ENCODE measurements at regions of chr16 and their contacts with region 1.

Region 1: GRCh38 chr16:75110637-75111513 is 5.7 kb downstream of the LDHD start:
- DNase-seq: peak; percentile 62
- ATAC-seq: peak; percentile 92
- H3K4me3 ChIP-seq: no peak overlapping the region
- H3K27ac ChIP-seq: no peak overlapping the region; the same call in 1 of the 2 replicates
- H3K4me1 ChIP-seq: peaks cover 36% of the 10 kb centered on the region
- H3K27me3 ChIP-seq: no peaks in the 10 kb centered on the region
- CTCF ChIP-seq: peak; percentile 95 to 97 (median 96)
- EP300 ChIP-seq: no peak
- POLR2A ChIP-seq: 0 out of 2 replicates have a peak, but pooled peaks have one; percentile 29
- RAD21 ChIP-seq: peak; percentile 97

Region 2: GRCh38 chr16:74709441-74709877 is 401.4 kb before region 1 on chr16:
- CTCF ChIA-PET with region 1: interaction called, 11 read pairs
- POLR2A ChIA-PET with region 1: no interaction called
- RAD21 ChIA-PET with region 1: interaction called, 4 read pairs
- SMC1A ChIA-PET with region 1: interaction called, 5 read pairs
- in situ Hi-C with region 1: loop called (anchors 5 kb)
- intact Hi-C with region 1: loop called (anchors 2 kb)
- DNase-seq: no peak
- ATAC-seq: peak; percentile 99
- H3K4me3 ChIP-seq: no peak overlapping the region
- H3K27ac ChIP-seq: no peak overlapping the region
- H3K4me1 ChIP-seq: no peaks in the 10 kb centered on the region
- H3K27me3 ChIP-seq: no peaks in the 10 kb centered on the region
- CTCF ChIP-seq: peak; percentile 95 to 99 (median 97)
- EP300 ChIP-seq: no peak
- POLR2A ChIP-seq: no peak
- RAD21 ChIP-seq: peak; percentile 94

Region 3: DNA sequence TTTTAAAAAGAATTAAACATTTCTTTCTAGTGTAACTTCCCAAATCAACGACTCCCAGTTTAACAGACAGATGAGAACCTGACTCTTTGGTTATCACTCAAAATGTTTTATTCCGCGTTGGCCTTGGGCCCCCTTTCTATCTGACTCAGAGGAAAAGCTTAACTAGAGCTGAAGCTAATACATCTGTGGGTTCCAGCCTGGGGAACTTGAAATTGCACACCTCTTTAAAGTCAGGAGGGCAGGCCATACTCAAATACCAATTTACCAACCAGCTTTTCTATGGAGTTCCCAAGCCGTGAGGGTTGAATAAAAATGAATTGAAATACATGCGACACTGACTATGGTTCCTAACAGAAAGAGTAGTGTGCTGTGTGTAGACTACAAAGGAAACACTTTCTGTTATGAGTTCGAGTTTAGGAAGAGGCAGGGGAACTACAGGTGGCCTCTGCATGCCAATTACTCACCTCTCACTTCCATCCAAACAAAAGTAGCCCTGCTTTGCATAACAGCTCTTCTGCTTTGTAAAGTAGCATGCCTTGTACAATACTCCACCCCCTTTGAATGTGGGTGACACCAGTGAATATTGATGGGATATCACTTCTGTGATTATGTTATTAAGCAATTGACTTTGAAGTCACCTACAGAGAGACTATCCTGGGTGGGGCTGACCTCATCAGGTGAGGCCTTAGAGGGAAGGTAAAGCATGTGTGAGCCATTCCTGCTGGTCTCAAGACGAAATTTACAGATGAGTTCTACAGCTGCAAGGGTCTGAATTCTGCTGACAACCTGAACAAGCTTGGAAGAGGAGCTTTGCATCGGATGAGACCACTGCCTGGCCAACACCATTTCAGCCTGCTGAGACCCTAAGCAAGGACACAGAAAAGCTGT is 218.1 kb before region 1 on chr16:
- CTCF ChIA-PET with region 1: interaction called, 5 read pairs
- POLR2A ChIA-PET with region 1: no interaction called
- RAD21 ChIA-PET with region 1: interaction called, 12 read pairs
- SMC1A ChIA-PET with region 1: interaction called, 3 read pairs
- in situ Hi-C with region 1: no loop called
- intact Hi-C with region 1: no loop called
- DNase-seq: peak; percentile 34
- ATAC-seq: peak; percentile 96
- H3K4me3 ChIP-seq: no peak overlapping the region
- H3K27ac ChIP-seq: peak overlapping the region; percentile 38; the same call in 1 of the 2 replicates
- H3K4me1 ChIP-seq: peaks cover 6% of the 10 kb centered on the region; the same call in 1 of the 2 replicates
- H3K27me3 ChIP-seq: no peaks in the 10 kb centered on the region
- CTCF ChIP-seq: no peak
- EP300 ChIP-seq: no peak
- POLR2A ChIP-seq: no peak
- RAD21 ChIP-seq: no peak

Region 4: GRCh38 chr16:74991593-74992403 is 119.1 kb before region 1 on chr16:
- CTCF ChIA-PET with region 1: interaction called, 90 read pairs
- POLR2A ChIA-PET with region 1: interaction called, 13 read pairs
- RAD21 ChIA-PET with region 1: interaction called, 92 read pairs
- SMC1A ChIA-PET with region 1: interaction called, 69 read pairs
- in situ Hi-C with region 1: loop called (anchors 5 kb)
- intact Hi-C with region 1: no loop called
- DNase-seq: no peak
- ATAC-seq: no peak
- H3K4me3 ChIP-seq: no peak overlapping the region
- H3K27ac ChIP-seq: no peak overlapping the region
- H3K4me1 ChIP-seq: no peaks in the 10 kb centered on the region
- H3K27me3 ChIP-seq: no peaks in the 10 kb centered on the region
- CTCF ChIP-seq: no peak
- EP300 ChIP-seq: no peak
- POLR2A ChIP-seq: no peak
- RAD21 ChIP-seq: no peak

Region 5: GRCh38 chr16:75043175-75043895 is 67.5 kb before region 1 on chr16:
- CTCF ChIA-PET with region 1: interaction called, 4 read pairs
- POLR2A ChIA-PET with region 1: no interaction called
- RAD21 ChIA-PET with region 1: no interaction called
- SMC1A ChIA-PET with region 1: interaction called, 8 read pairs
- in situ Hi-C with region 1: loop called (anchors 10 kb)
- intact Hi-C with region 1: no loop called
- DNase-seq: peak; percentile 59
- ATAC-seq: peak; percentile 93
- H3K4me3 ChIP-seq: no peak overlapping the region; the same call in 1 of the 2 replicates
- H3K27ac ChIP-seq: 0 out of 2 replicates have a peak overlapping the region, but pooled peaks have one; percentile 5
- H3K4me1 ChIP-seq: peaks cover 27% of the 10 kb centered on the region
- H3K27me3 ChIP-seq: no peaks in the 10 kb centered on the region
- CTCF ChIP-seq: no peak
- EP300 ChIP-seq: no peak
- POLR2A ChIP-seq: no peak
- RAD21 ChIP-seq: no peak

Region 6: GRCh38 chr16:75406945-75407344 is 296.1 kb after region 1 on chr16:
- CTCF ChIA-PET with region 1: no interaction called
- POLR2A ChIA-PET with region 1: no interaction called
- RAD21 ChIA-PET with region 1: no interaction called
- SMC1A ChIA-PET with region 1: no interaction called
- in situ Hi-C with region 1: no loop called
- intact Hi-C with region 1: no loop called
- DNase-seq: no peak
- ATAC-seq: no peak
- H3K4me3 ChIP-seq: no peak overlapping the region
- H3K27ac ChIP-seq: no peak overlapping the region
- H3K4me1 ChIP-seq: no peaks in the 10 kb centered on the region
- H3K27me3 ChIP-seq: no peaks in the 10 kb centered on the region
- CTCF ChIP-seq: no peak
- EP300 ChIP-seq: no peak
- POLR2A ChIP-seq: no peak
- RAD21 ChIP-seq: no peak